SK-N-SH (cell line): ENCODE measurements at regions of chr11 and their contacts with region 1.

Region 1: GRCh38 chr11:57515332-57516060 is at the start of gene SLC43A1:
- DNase-seq: peak; percentile 74
- H3K4me3 ChIP-seq: peak within 1 kb of the TSS; percentile 69 to 78
- H3K27ac ChIP-seq: no peak within 1 kb of the TSS; a peak in 1 of 4 replicates
- H3K4me1 ChIP-seq: peaks cover 0 to 9% of the 10 kb centered on the region in 2 experiments; a peak in 1 of 4 replicates
- H3K27me3 ChIP-seq: no peaks in the 10 kb centered on the region
- CTCF ChIP-seq: no peak
- EP300 ChIP-seq: no peak
- RAD21 ChIP-seq: no peak
- polyA plus RNA-seq, gene SLC43A1: 3.7 and 4.4 TPM in 2 replicates

Region 2: DNA sequence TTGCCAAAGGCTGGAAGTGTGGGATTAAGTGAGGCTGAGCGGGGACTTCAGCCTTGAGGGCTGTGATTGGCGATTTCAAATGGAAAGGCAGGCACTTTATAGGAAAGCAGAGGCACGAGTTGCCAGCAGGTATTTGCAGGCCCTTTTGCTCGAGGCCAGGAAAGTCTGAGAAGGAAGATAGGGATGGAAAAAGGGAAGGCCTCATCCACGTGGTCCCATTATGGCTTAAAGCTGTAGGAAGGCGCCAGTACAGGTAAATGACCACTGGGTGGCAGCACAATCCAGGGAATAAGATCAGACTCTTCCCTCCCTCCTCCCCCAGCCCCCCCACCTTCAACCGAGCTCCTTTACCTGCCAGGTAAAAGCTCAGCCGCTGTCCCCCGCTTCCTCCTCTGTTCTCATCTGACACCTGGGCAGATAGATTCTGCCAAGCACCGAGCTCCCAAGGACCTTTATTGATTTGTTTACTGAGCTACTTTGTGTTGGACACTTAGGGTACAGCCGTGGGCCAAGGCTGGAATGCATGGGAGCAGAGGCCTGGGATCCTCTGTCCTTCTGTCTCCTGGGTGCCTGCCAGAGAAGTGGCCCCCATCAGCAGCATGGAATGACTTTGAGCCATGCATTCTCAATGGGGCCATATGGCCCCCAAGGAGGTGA is 169.8 kb before region 1 on chr11:
- CTCF ChIA-PET with region 1: interaction called, 14 read pairs
- POLR2A ChIA-PET with region 1: no interaction called
- DNase-seq: peak; percentile 86
- H3K4me3 ChIP-seq: no peak overlapping the region; a peak in 1 of 4 replicates
- H3K27ac ChIP-seq: no peak overlapping the region; a peak in 1 of 4 replicates
- H3K4me1 ChIP-seq: peaks cover 0 to 2% of the 10 kb centered on the region in 2 experiments; a peak in 1 of 4 replicates
- H3K27me3 ChIP-seq: no peaks in the 10 kb centered on the region
- CTCF ChIP-seq: peak; percentile 68
- EP300 ChIP-seq: no peak
- RAD21 ChIP-seq: peak; percentile 75

Region 3: DNA sequence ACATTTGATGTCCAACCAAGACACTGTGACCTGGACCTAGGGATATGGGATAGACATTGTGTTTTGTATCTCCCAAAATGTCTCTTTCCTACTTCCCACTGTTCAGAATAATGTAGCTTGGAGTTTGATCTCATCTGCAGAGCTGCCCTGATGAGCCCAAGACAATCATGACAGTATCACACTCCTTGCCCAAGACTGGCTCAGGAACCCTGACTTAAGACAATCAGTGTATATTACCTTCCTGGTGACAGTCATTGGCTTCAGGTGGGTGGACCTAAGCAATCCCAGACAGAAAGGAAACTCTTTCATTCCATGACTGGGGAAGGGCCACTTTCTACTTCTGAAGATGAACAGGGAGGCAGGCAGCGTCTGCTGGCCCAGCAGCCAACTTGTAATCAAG is 69.4 kb before region 1 on chr11:
- CTCF ChIA-PET with region 1: no interaction called
- POLR2A ChIA-PET with region 1: no interaction called
- DNase-seq: no peak
- H3K4me3 ChIP-seq: no peak overlapping the region
- H3K27ac ChIP-seq: no peak overlapping the region
- H3K4me1 ChIP-seq: no peaks in the 10 kb centered on the region
- H3K27me3 ChIP-seq: no peaks in the 10 kb centered on the region; the same call in 1 of the 2 replicates
- CTCF ChIP-seq: no peak
- EP300 ChIP-seq: no peak
- RAD21 ChIP-seq: no peak

Region 4: DNA sequence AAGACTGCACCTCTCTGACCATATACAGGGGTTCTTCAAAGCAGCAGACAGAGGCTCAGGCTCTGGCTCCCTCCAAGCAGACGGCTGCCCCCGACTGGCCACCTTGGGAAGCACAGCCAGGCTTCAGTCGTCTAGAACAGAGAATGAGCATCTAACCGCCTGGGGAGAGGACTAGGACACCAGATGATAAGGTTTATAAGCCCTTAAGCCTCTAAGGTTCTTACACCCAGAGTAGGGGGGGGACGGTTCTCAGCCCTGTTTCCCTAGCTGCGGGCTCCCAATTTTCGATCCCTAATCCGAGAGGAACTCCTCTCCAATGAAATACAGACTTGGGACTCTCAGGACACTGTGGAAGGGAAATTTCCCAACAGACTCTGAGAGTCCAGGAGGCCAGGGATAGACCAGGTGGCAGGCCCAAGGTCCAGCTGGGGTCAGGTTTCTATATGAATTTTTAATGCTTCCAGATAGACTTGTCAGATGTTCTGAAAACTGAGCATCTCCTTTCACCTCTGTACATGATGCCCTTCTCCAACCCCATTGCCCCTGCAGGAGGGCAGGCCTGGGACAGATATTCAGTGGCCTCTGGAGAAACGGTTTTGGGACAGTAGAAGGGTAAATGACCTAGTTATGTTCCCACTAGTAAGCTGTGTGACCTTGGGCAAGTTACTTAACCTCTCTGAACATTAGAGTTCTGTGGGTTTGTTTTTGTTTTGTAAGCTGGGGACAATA is 34.9 kb before region 1 on chr11:
- CTCF ChIA-PET with region 1: interaction called, 41 read pairs
- POLR2A ChIA-PET with region 1: no interaction called
- DNase-seq: peak; percentile 82
- H3K4me3 ChIP-seq: peak overlapping the region in 1 of 2 experiments; percentile 26; a peak in 1 of 4 replicates
- H3K27ac ChIP-seq: no peak overlapping the region
- H3K4me1 ChIP-seq: peaks cover 4 to 17% of the 10 kb centered on the region in 2 experiments; a peak in 2 of 4 replicates
- H3K27me3 ChIP-seq: peaks cover 28% of the 10 kb centered on the region
- CTCF ChIP-seq: peak; percentile 61
- EP300 ChIP-seq: no peak
- RAD21 ChIP-seq: peak; percentile 52

Region 5: GRCh38 chr11:57499413-57499982 is 16.0 kb before region 1 on chr11:
- CTCF ChIA-PET with region 1: interaction called, 63 read pairs
- POLR2A ChIA-PET with region 1: interaction called, 5 read pairs
- DNase-seq: peak; percentile 100
- H3K4me3 ChIP-seq: peak overlapping the region; percentile 30 to 36; a peak in 3 of 4 replicates
- H3K27ac ChIP-seq: peak overlapping the region in 1 of 2 experiments; percentile 51; a peak in 1 of 4 replicates
- H3K4me1 ChIP-seq: peaks cover 11 to 12% of the 10 kb centered on the region in 2 experiments; a peak in 2 of 4 replicates
- H3K27me3 ChIP-seq: no peaks in the 10 kb centered on the region
- CTCF ChIP-seq: no peak
- EP300 ChIP-seq: no peak
- RAD21 ChIP-seq: no peak

Region 6: GRCh38 chr11:58616594-58616993 is 1101.1 kb after region 1 on chr11:
- CTCF ChIA-PET with region 1: no interaction called
- POLR2A ChIA-PET with region 1: no interaction called
- DNase-seq: no peak
- H3K4me3 ChIP-seq: no peak overlapping the region
- H3K27ac ChIP-seq: 0 out of 4 replicates have a peak overlapping the region, but pooled peaks of 1 of the 2 experiments have one; percentile 5
- H3K4me1 ChIP-seq: no peaks in the 10 kb centered on the region
- H3K27me3 ChIP-seq: no peaks in the 10 kb centered on the region
- CTCF ChIP-seq: no peak
- EP300 ChIP-seq: no peak
- RAD21 ChIP-seq: no peak